ENCODE measurements at regions of chr13 and their contacts with region 1.

Region 1: GRCh38 chr13:72781451-72782439 is at the starts of genes DIS3 and PIBF1:
- DNase-seq: peak; percentile 97
- ATAC-seq: peak; percentile 99
- H3K4me3 ChIP-seq: peak within 1 kb of the TSS; percentile 73 to 91 (median 89)
- H3K27ac ChIP-seq: peak within 1 kb of the TSS; percentile 77
- H3K4me1 ChIP-seq: peaks cover 35% of the 10 kb centered on the region
- H3K27me3 ChIP-seq: no peaks in the 10 kb centered on the region; a peak in 1 of 5 replicates
- CTCF ChIP-seq: no peak
- EP300 ChIP-seq: no peak
- POLR2A ChIP-seq: peak; percentile 74 to 92
- RAD21 ChIP-seq: no peak; the same call in 1 of the 2 replicates
- total RNA-seq, gene DIS3: 35.0 and 52.5 TPM in 2 replicates
- total RNA-seq, gene PIBF1: 15.8 and 16.1 TPM in 2 replicates

Region 2: GRCh38 chr13:72617951-72618350 is 163.8 kb before region 1 on chr13:
- CTCF ChIA-PET with region 1: no interaction called
- POLR2A ChIA-PET with region 1: no interaction called
- in situ Hi-C with region 1: no loop called
- intact Hi-C with region 1: no loop called
- DNase-seq: no peak
- ATAC-seq: no peak
- H3K4me3 ChIP-seq: no peak overlapping the region
- H3K27ac ChIP-seq: no peak overlapping the region
- H3K4me1 ChIP-seq: no peaks in the 10 kb centered on the region
- H3K27me3 ChIP-seq: no peaks in the 10 kb centered on the region
- CTCF ChIP-seq: no peak
- EP300 ChIP-seq: no peak
- POLR2A ChIP-seq: no peak
- RAD21 ChIP-seq: no peak

Region 3: DNA sequence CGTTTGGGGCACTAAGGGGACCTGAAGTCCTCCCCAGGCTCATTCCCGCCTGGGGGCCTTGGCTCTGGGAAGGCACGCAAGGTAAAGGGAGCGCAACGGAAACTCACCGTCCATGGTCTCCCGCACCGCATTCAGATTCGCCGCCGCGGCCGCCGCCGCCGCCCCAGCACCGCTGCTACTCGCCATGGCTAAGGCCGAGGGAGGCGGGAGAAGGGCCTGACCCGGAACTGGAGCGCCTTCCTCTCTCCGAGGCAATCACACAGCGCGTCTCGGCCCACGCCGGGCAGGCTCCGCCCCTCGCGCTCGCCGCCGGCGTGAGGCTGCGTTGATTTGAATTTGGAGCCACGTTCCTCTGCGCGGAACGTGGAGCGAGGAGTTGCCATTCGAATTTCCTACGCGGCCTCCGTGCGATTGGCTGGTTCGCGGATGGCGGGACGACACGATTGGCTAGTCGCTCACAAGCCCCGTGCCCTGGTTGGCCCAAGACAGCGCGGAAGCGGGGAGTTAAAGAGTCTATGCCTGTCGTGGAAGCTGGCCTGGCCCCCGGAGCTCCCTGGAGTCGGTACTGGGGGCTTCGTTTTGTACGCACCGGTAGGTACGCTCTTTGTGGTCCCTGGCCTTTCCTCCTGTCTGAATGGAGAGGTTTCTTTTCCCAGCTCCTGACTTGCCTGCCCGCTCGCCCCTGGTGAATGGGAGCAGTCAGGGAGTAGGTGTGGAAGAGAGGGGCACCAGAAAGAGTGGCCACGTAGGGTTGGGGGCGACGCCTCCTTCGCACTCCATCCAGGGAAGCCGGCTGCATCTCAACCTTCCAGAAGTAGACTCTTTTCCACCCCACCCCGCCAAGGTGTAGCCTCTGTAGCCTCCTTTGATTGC is 54.1 kb before region 1 on chr13 and contains the starts of genes BORA and MZT1:
- CTCF ChIA-PET with region 1: no interaction called
- POLR2A ChIA-PET with region 1: no interaction called
- in situ Hi-C with region 1: no loop called
- intact Hi-C with region 1: loop called (anchors 2 kb)
- DNase-seq: peak; percentile 94
- ATAC-seq: peak; percentile 98
- H3K4me3 ChIP-seq: peak within 1 kb of the TSS; percentile 80 to 94 (median 89)
- H3K27ac ChIP-seq: peak within 1 kb of the TSS; percentile 83
- H3K4me1 ChIP-seq: peaks cover 39% of the 10 kb centered on the region
- H3K27me3 ChIP-seq: no peaks in the 10 kb centered on the region; a peak in 1 of 5 replicates
- CTCF ChIP-seq: no peak
- EP300 ChIP-seq: no peak
- POLR2A ChIP-seq: peak; percentile 69 to 78
- RAD21 ChIP-seq: no peak
- total RNA-seq, gene BORA: 17.4 and 29.3 TPM in 2 replicates
- total RNA-seq, gene MZT1: 17.2 and 28.2 TPM in 2 replicates